ENCODE measurements at regions of chr7 and their contacts with region 1.

Region 1: GRCh38 chr7:149460493-149461277 is at the start of gene ZNF777:
- DNase-seq: peak; percentile 93

Region 2: GRCh38 chr7:149497456-149498261 is 37.0 kb after region 1 on chr7 and contains the start of gene ZNF746:
- CTCF ChIA-PET with region 1: interaction called, 3 read pairs
- POLR2A ChIA-PET with region 1: interaction called, 14 read pairs
- DNase-seq: peak; percentile 99

Region 3: DNA sequence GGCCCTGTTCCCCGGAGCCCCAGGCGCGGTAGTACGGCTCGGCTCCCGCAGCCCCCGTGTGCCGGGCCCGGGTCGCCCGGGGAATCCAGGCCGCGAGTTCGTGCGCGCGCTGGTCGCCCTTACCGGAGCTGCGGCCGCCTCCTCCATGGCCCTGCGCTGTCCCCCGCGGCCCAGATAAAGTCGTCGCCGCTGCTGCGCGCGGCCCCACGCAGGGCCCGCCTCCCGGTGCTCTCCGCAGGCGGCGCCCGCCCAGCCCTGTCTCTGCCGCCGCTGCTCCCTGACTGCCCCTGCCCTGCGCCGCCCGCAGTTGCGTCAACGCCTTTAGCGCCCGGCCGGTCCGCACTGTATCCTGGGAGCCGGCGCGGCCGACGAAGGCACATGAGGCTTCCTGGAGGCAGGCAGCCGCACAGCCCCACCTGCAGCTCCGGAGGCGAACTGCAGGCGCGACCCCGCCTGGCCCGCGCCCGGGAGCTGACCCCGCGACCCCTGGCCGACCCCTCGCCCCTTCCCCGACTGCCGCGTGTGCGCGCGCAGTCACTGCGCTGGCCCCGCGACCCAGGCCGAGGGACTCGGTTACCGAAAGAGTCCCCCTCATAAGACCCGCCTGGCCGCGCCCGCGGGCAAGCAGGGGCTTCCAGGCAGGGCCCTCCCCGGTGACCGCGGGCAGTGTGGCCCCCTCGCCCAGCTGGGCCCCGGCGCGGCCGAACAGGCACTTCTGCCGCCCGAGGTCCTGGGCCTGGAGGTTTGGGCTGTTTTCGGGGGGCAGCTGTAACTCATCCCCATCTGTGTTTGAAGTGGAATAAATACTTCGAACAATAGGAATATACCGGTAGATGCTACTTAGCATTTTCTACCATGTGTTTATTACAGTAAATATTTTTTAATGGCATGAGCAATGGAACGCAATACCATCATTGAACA is 164.0 kb after region 1 on chr7:
- CTCF ChIA-PET with region 1: no interaction called
- POLR2A ChIA-PET with region 1: interaction called, 11 read pairs
- DNase-seq: peak; percentile 97